ENCODE measurements at regions of chr15 and their contacts with region 1.

Region 1: DNA sequence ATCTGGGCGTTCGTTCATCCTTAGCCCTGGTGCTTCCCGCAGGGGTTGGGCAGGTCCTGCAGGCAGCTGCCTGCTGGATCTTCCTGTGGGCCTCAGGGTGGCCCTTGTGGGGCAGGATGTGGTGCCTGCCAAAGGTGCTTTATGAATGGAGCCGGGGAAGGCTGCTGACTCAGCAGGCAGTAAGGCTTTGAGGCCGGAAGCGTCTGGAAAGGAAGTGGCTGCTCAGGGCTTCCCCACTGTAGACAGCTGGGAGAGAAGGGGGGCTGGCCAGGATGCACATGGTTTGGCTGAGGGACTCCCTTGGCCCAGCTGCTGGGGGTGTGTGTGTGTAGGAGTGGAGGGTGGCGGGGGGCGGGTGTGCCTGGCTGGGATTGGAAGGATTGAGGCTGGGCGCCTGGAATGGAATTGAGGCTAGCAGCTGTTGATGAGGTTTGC is 12.9 kb downstream of the CD276 start:
- DNase-seq: peak; percentile 85 to 91
- ATAC-seq: peak; percentile 82 to 93 (median 90)
- H3K4me3 ChIP-seq: no peak overlapping the region
- H3K27ac ChIP-seq: peak overlapping the region; percentile 76
- H3K4me1 ChIP-seq: peaks cover 48% of the 10 kb centered on the region
- H3K27me3 ChIP-seq: no peaks in the 10 kb centered on the region
- CTCF ChIP-seq: no peak

Region 2: GRCh38 chr15:73273181-73274002 is 423.7 kb before region 1 on chr15:
- intact Hi-C with region 1: no loop called
- DNase-seq: peak; percentile 17 to 53
- ATAC-seq: peak; percentile 84 to 96 (median 90)
- H3K4me3 ChIP-seq: no peak overlapping the region
- H3K27ac ChIP-seq: no peak overlapping the region
- H3K4me1 ChIP-seq: peaks cover 6% of the 10 kb centered on the region
- H3K27me3 ChIP-seq: no peaks in the 10 kb centered on the region
- CTCF ChIP-seq: peak; percentile 80

Region 3: DNA sequence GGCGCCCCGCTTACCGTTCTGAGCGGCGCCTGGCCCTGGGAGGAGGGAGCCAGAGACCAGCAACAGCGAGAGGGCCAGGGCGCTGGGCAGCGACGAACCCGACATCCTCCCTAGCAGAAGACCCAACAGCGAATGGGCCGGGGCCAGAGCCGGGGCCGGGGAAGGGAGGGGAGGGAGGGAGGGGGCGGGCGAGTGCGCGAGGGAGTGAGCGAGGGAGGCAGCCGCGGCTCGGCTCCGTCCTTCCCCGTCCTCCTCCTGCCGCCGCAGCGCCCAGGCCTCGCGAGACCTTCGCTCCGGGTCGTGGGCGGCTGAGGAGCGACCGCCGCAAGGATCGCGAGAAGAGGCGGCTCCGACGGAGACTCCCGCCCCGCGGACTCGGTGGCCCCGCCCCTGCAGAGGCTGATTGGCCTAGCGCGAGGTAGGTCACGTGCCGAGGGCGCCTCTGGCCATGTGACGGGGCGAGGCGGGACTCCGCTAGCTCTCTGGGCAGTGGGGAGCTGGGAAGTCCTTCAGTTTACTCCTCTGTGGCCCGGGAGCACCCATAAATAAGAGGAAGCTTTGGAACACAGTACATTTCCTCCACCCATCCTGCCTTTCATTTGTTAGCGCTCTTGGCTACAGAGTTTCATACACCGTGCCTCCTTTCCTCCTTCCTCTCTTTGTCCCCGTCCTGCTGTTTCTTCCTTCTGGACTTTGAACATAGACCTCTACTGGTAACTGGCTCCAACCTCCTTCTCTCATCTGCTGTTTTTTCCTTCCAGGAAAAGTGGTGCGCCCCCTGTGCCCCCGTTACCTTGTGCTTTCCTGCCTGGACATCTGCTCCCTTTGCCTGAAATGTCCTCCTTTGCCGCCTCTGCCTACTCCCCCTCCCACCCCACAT is 63.7 kb before region 1 on chr15 and contains the start of gene NPTN:
- intact Hi-C with region 1: loop called (anchors 5 kb)
- DNase-seq: peak; percentile 99 to 100
- ATAC-seq: peak; percentile 96 to 98 (median 97)
- H3K4me3 ChIP-seq: peak within 1 kb of the TSS; percentile 85
- H3K27ac ChIP-seq: peak within 1 kb of the TSS; percentile 81
- H3K4me1 ChIP-seq: peaks cover 42% of the 10 kb centered on the region
- H3K27me3 ChIP-seq: no peaks in the 10 kb centered on the region
- CTCF ChIP-seq: no peak
- total RNA-seq, gene NPTN: 28.8 to 40.8 (median 32.6) TPM

Region 4: DNA sequence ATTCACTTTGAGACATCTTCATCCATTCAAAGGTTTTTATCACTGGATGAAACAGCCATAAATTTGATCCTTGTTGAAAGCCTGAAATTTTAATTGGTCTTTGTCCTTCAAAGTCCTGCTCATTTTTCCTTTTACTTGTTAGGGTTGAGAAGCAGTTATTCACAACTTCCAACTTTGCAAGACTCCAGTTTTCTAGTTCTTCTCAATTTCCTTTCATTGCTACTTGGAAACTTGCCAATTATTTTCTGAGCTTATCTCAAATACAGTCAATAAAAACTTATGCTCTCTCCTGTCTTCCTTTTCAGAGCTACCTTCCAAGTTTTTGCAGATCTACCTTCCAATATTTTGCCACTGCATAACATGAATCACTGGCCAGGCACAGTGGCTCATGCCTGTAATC is 36.6 kb before region 1 on chr15:
- intact Hi-C with region 1: loop called in 1 of 2 experiments (anchors 5 kb)
- DNase-seq: no peak
- ATAC-seq: no peak
- H3K4me3 ChIP-seq: no peak overlapping the region
- H3K27ac ChIP-seq: no peak overlapping the region
- H3K4me1 ChIP-seq: no peaks in the 10 kb centered on the region
- H3K27me3 ChIP-seq: peaks cover 0 to 6% (median 0%) of the 10 kb centered on the region in 3 donors
- CTCF ChIP-seq: no peak

Region 5: GRCh38 chr15:73677146-73677607 is 19.9 kb before region 1 on chr15:
- intact Hi-C with region 1: loop called (anchors 1 to 2 kb)
- DNase-seq: peak; percentile 46 to 64
- ATAC-seq: peak; percentile 86 to 94 (median 92)
- H3K4me3 ChIP-seq: no peak overlapping the region
- H3K27ac ChIP-seq: no peak overlapping the region
- H3K4me1 ChIP-seq: no peaks in the 10 kb centered on the region
- H3K27me3 ChIP-seq: peaks cover 0 to 4% (median 1%) of the 10 kb centered on the region in 3 donors
- CTCF ChIP-seq: peak; percentile 91

Region 6: GRCh38 chr15:73809733-73810501 is 112.9 kb after region 1 on chr15:
- intact Hi-C with region 1: no loop called
- DNase-seq: no peak
- ATAC-seq: peak in 3 of 4 donors; percentile 52 to 77 (median 62)
- H3K4me3 ChIP-seq: no peak overlapping the region
- H3K27ac ChIP-seq: no peak overlapping the region
- H3K4me1 ChIP-seq: no peaks in the 10 kb centered on the region
- H3K27me3 ChIP-seq: no peaks in the 10 kb centered on the region
- CTCF ChIP-seq: no peak

Region 7: DNA sequence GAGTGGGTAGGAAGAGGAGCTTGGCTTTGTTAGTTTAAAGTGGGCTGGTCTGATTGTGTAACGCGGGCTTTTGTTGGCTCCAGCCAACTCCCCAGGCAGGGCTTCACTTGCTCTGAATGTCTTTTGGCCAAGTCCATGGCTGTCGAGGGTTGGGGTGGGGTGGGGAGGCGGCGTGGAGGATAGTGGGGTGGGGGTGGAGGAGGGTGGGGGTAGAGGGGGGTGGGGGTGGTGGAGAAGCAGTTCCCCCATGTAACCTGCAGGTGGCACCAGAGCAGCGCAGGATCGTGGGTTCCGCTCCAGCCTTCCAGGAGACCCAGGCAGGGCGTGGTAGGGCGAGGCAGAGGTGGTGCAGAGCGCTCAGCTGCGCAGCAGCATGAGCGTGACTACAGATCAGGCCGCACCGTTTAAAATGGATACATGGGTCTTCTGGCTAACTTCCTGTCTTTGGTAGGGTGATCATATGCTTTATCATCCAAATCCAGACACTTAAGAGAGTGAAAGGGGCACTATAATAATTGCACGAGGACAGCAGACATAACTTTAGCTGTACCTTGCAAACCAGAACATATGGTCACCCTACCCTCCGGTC is 357.0 kb after region 1 on chr15:
- intact Hi-C with region 1: no loop called
- DNase-seq: peak; percentile 82 to 87
- ATAC-seq: peak; percentile 73 to 87 (median 82)
- H3K4me3 ChIP-seq: no peak overlapping the region
- H3K27ac ChIP-seq: no peak overlapping the region
- H3K4me1 ChIP-seq: peaks cover 5% of the 10 kb centered on the region
- H3K27me3 ChIP-seq: no peaks in the 10 kb centered on the region
- CTCF ChIP-seq: peak; percentile 41

Measured in psoas muscle (tissue), 8 donors.